HEK293T (cell line): ENCODE measurements at regions of chr6 and their contacts with region 1.

Region 1: GRCh38 chr6:30061092-30061857 is at the start of gene POLR1H:
- DNase-seq: peak; percentile 93

Region 2: DNA sequence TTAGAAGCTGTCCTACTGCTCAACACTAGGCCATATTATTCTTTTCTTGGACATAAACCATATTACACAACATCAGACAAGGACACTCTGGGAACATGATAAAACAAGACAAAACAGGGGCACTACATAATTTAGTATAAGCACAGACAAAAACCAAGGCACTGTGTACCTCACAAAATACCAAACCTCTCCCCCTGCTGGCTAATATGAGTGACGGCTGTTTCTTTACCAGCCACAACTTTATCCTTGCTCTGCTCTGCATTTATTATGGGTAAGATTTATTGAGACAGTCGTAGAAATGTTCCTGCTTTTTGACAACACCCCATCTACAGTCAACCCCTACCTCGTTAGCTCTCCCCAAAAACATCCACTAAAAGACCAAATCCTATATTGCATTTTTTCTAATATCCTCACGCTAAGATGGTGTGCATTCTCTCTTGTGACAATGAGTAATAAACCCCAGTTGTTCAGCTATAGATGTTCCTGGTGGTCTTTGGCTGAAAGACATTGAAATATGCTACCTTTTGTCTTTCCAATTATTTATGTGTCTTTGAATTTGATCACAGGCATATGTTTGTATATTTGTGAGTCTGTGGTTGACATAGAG is 24.0 kb before region 1 on chr6:
- CTCF ChIA-PET with region 1: interaction called, 4 read pairs
- POLR2A ChIA-PET with region 1: interaction called, 12 read pairs
- DNase-seq: peak; percentile 50